Mammary epithelial cell (primary cell): ENCODE measurements at regions of chr13 and their contacts with region 1.

Region 1: DNA sequence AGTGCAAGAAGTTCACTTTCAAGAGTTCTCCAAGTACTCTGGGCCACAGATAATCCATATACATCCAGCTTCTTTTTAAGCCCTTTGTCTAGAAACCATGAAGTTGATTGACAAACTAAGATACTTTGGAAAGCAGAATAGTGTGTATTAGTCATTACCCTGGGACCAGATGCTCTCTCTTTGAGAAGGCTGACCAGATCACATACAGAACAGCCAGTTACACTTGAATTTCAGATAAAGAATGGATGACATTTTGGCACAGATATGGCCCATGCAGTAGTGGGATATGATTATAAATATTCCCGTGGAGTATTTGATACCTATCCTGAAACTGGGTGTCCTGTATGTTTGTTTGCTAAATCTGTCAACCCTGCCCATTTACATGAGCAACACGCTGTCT is 414.2 kb downstream of the KLF5 start:
- DNase-seq: no peak
- H3K4me3 ChIP-seq: no peak overlapping the region
- H3K27ac ChIP-seq: no peak overlapping the region
- H3K4me1 ChIP-seq: no peaks in the 10 kb centered on the region
- H3K27me3 ChIP-seq: no peaks in the 10 kb centered on the region
- CTCF ChIP-seq: no peak

Region 2: GRCh38 chr13:73505376-73505890 is 32.4 kb after region 1 on chr13:
- CTCF ChIA-PET with region 1: no interaction called
- dilution Hi-C with region 1: loop called (anchors 5 kb)
- in situ Hi-C with region 1: no loop called
- intact Hi-C with region 1: no loop called
- DNase-seq: no peak
- H3K4me3 ChIP-seq: no peak overlapping the region
- H3K27ac ChIP-seq: no peak overlapping the region
- H3K4me1 ChIP-seq: no peaks in the 10 kb centered on the region
- H3K27me3 ChIP-seq: no peaks in the 10 kb centered on the region
- CTCF ChIP-seq: no peak